ENCODE measurements at regions of chr1 and their contacts with region 1.

Region 1: GRCh38 chr1:205284343-205285144 is 37.0 kb downstream of the NUAK2 start:
- H3K4me3 ChIP-seq: no peak overlapping the region
- H3K27ac ChIP-seq: no peak overlapping the region
- H3K4me1 ChIP-seq: no peaks in the 10 kb centered on the region
- CTCF ChIP-seq: no peak; the same call in 1 of the 2 replicates

Region 2: DNA sequence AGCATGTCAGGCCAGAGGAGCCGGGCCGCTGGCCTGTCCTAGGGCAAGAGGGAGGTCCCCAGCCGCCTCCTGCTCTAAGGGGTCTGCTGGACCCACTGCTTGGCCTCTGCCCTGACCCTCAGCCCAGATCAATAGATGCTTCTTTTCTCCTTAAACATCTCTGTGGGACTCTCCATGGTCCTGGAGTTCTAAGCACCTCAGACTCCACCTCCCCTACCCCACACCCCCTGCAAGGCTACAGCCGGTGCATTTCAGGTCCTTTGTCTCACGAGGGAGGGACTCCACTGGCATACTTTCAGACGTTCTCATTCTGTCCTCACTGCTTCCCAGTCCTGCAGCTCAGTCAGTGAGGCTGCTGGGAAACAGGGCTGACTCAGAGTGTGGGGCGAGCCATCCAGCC is 230.5 kb before region 1 on chr1:
- CTCF ChIA-PET with region 1: no interaction called
- POLR2A ChIA-PET with region 1: no interaction called
- H3K4me3 ChIP-seq: no peak overlapping the region
- H3K27ac ChIP-seq: no peak overlapping the region
- H3K4me1 ChIP-seq: no peaks in the 10 kb centered on the region
- CTCF ChIP-seq: no peak

Region 3: GRCh38 chr1:205273551-205273982 is 11.0 kb before region 1 on chr1:
- CTCF ChIA-PET with region 1: interaction called, 39 read pairs
- POLR2A ChIA-PET with region 1: interaction called, 6 read pairs
- H3K4me3 ChIP-seq: no peak overlapping the region
- H3K27ac ChIP-seq: no peak overlapping the region
- H3K4me1 ChIP-seq: no peaks in the 10 kb centered on the region
- CTCF ChIP-seq: peak; percentile 93

Region 4: GRCh38 chr1:205300886-205301821 is 16.6 kb after region 1 on chr1:
- CTCF ChIA-PET with region 1: interaction called, 5 read pairs
- POLR2A ChIA-PET with region 1: interaction called, 23 read pairs
- H3K4me3 ChIP-seq: peak overlapping the region; percentile 21
- H3K27ac ChIP-seq: peak overlapping the region; percentile 22; the same call in 1 of the 2 replicates
- H3K4me1 ChIP-seq: peaks cover 7% of the 10 kb centered on the region
- CTCF ChIP-seq: no peak

Region 5: DNA sequence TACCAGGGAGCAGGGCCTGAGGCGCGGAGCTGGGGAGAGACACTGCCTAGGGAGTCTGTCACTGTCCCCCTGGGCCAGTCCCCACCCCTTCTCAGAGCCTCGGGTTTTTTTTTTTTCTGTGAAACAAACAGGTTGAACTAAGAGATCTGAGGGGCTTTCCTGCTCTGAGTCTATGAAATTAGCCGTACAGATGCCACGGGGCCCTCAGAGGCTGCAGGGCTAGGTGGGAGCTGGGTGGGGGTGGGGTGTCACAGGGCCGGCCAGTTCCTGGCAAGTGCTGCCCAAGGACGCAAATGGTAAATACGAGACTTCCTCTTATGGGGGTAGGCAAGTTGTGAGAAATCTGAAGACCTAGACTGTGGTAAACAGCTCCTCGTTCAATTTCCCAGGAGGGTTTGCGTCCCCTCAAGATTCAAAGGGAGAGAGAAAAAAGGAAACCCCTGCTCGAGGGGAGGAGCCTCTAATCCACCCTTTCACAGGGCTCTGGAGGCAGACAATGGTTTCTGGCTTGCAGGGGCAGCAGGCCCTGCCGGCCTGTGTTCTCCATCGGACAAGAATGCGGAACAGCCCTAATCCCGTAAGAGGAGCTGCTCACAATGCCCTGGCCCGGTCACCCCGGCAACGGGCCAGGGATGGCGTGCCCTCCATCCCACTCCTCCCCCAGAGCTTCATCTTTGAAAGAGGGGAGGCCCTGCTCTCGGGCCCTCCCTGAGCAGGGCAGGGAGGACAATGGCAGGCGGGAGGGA is 29.2 kb after region 1 on chr1:
- CTCF ChIA-PET with region 1: interaction called, 11 read pairs
- POLR2A ChIA-PET with region 1: interaction called, 3 read pairs
- H3K4me3 ChIP-seq: no peak overlapping the region
- H3K27ac ChIP-seq: no peak overlapping the region
- H3K4me1 ChIP-seq: peaks cover 5% of the 10 kb centered on the region; the same call in 1 of the 2 replicates
- CTCF ChIP-seq: no peak